Esophagus muscularis mucosa (tissue), 4 donors: ENCODE measurements at regions of chr3 and their contacts with region 1.

Region 1: GRCh38 chr3:30042274-30042859 is 564.0 kb upstream of the TGFBR2 start:
- DNase-seq: no peak
- H3K4me3 ChIP-seq: no peak overlapping the region
- H3K27ac ChIP-seq: no peak overlapping the region
- H3K4me1 ChIP-seq: peaks cover 0 to 5% (median 0%) of the 10 kb centered on the region in 4 donors
- H3K27me3 ChIP-seq: no peaks in the 10 kb centered on the region
- CTCF ChIP-seq: peak; percentile 68 to 77 (median 75)
- EP300 ChIP-seq: no peak
- POLR2A ChIP-seq: no peak

Region 2: DNA sequence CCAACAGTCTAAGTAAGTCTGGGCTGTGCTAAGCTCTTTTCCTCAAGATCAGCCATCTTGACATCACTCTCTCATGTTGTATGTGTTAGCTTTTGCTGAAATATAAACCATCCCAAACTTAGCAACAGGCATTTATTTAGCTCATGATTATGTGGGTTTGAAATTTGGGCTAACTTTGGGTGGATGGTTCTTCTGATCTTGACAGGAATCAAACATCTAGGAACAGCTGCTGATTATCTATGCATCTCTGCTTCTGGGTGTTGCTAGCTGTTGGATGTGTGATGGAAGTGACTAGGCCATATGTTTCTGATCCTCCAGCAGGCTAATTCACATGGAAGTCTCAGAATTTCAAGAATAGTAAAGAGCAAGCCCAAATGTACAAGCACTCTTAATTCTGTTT is 51.2 kb before region 1 on chr3:
- intact Hi-C with region 1: no loop called
- DNase-seq: no peak
- H3K4me3 ChIP-seq: no peak overlapping the region
- H3K27ac ChIP-seq: no peak overlapping the region
- H3K4me1 ChIP-seq: no peaks in the 10 kb centered on the region
- H3K27me3 ChIP-seq: no peaks in the 10 kb centered on the region
- CTCF ChIP-seq: no peak
- EP300 ChIP-seq: no peak
- POLR2A ChIP-seq: no peak

Region 3: GRCh38 chr3:30098653-30099455 is 56.5 kb after region 1 on chr3:
- intact Hi-C with region 1: no loop called
- DNase-seq: no peak
- H3K4me3 ChIP-seq: no peak overlapping the region
- H3K27ac ChIP-seq: no peak overlapping the region
- H3K4me1 ChIP-seq: peaks cover 0 to 8% (median 2%) of the 10 kb centered on the region in 4 donors
- H3K27me3 ChIP-seq: no peaks in the 10 kb centered on the region
- CTCF ChIP-seq: no peak
- EP300 ChIP-seq: no peak
- POLR2A ChIP-seq: no peak

Region 4: GRCh38 chr3:30199096-30199759 is 156.9 kb after region 1 on chr3:
- intact Hi-C with region 1: loop called (anchors 2 kb)
- DNase-seq: no peak
- H3K4me3 ChIP-seq: no peak overlapping the region
- H3K27ac ChIP-seq: peak overlapping the region in 1 of 4 donors; percentile 14
- H3K4me1 ChIP-seq: peaks cover 15 to 26% (median 17%) of the 10 kb centered on the region in 4 donors
- H3K27me3 ChIP-seq: no peaks in the 10 kb centered on the region
- CTCF ChIP-seq: peak; percentile 74 to 83 (median 82)
- EP300 ChIP-seq: no peak
- POLR2A ChIP-seq: no peak